ENCODE measurements at regions of chr5 and their contacts with region 1.

Region 1: GRCh38 chr5:61625681-61626621 is 293.9 kb downstream of the ZSWIM6 start:
- DNase-seq: peak; percentile 29 to 83
- H3K4me3 ChIP-seq: peak overlapping the region; percentile 35 to 69 (median 46)
- H3K27ac ChIP-seq: no peak overlapping the region; the same call in 1 of the 2 replicates
- H3K4me1 ChIP-seq: peaks cover 4 to 7% (median 6%) of the 10 kb centered on the region in 4 experiments; a peak in 6 of 7 replicates
- H3K27me3 ChIP-seq: no peaks in the 10 kb centered on the region; a peak in 1 of 7 replicates
- CTCF ChIP-seq: no peak
- EP300 ChIP-seq: no peak
- POLR2A ChIP-seq: peak; percentile 37 to 57; a peak in 2 of 3 replicates
- RAD21 ChIP-seq: no peak

Region 2: GRCh38 chr5:61603211-61603908 is 22.6 kb before region 1 on chr5:
- CTCF ChIA-PET with region 1: interaction called, 34 read pairs
- POLR2A ChIA-PET with region 1: interaction called, 3 read pairs
- DNase-seq: no peak
- H3K4me3 ChIP-seq: no peak overlapping the region
- H3K27ac ChIP-seq: no peak overlapping the region
- H3K4me1 ChIP-seq: peaks cover 0 to 3% (median 0%) of the 10 kb centered on the region in 4 experiments; a peak in 2 of 7 replicates
- H3K27me3 ChIP-seq: no peaks in the 10 kb centered on the region
- CTCF ChIP-seq: peak in 1 of 3 experiments; percentile 11; a peak in 1 of 4 replicates
- EP300 ChIP-seq: no peak
- POLR2A ChIP-seq: no peak
- RAD21 ChIP-seq: peak in 1 of 2 experiments; percentile 34; a peak in 2 of 4 replicates

Region 3: GRCh38 chr5:61614624-61615023 is 11.3 kb before region 1 on chr5:
- CTCF ChIA-PET with region 1: interaction called, 45 read pairs
- POLR2A ChIA-PET with region 1: no interaction called
- DNase-seq: no peak
- H3K4me3 ChIP-seq: no peak overlapping the region
- H3K27ac ChIP-seq: no peak overlapping the region
- H3K4me1 ChIP-seq: peaks cover 0 to 4% (median 2%) of the 10 kb centered on the region in 4 experiments; a peak in 4 of 7 replicates
- H3K27me3 ChIP-seq: no peaks in the 10 kb centered on the region
- CTCF ChIP-seq: no peak
- EP300 ChIP-seq: no peak
- POLR2A ChIP-seq: no peak
- RAD21 ChIP-seq: no peak

Region 4: GRCh38 chr5:61666064-61666621 is 40.2 kb after region 1 on chr5:
- CTCF ChIA-PET with region 1: no interaction called
- POLR2A ChIA-PET with region 1: no interaction called
- DNase-seq: no peak
- H3K4me3 ChIP-seq: no peak overlapping the region
- H3K27ac ChIP-seq: no peak overlapping the region
- H3K4me1 ChIP-seq: no peaks in the 10 kb centered on the region
- H3K27me3 ChIP-seq: no peaks in the 10 kb centered on the region
- CTCF ChIP-seq: no peak
- EP300 ChIP-seq: no peak
- POLR2A ChIP-seq: no peak
- RAD21 ChIP-seq: no peak

Region 5: GRCh38 chr5:61783481-61783880 is 157.5 kb after region 1 on chr5:
- CTCF ChIA-PET with region 1: no interaction called
- POLR2A ChIA-PET with region 1: no interaction called
- DNase-seq: no peak
- H3K4me3 ChIP-seq: no peak overlapping the region
- H3K27ac ChIP-seq: no peak overlapping the region
- H3K4me1 ChIP-seq: peaks cover 0 to 3% (median 1%) of the 10 kb centered on the region in 4 experiments; a peak in 2 of 7 replicates
- H3K27me3 ChIP-seq: no peaks in the 10 kb centered on the region
- CTCF ChIP-seq: no peak
- EP300 ChIP-seq: no peak
- POLR2A ChIP-seq: no peak
- RAD21 ChIP-seq: no peak

Measured in H1 (cell line).